ENCODE measurements at regions of chr2 and their contacts with region 1.

Region 1: DNA sequence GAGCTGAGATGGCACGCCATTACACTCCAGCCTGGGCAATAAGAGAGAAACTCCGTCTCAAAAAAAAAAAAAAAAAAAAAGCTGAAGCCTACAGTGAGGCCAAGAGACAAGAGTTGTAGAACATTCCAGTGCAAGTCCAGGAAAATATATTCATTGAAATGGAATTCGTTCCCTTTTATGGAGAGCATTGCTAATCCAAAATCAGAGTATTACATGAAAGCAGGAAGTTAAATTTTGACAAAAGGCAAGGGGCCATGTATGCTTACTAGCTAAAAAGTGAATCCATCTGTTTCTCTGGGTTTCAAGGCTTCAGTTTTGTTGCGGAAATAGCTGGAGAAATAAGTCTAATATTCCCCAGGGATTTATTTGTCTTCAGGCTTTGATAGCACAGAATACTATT is 471.7 kb downstream of the THSD7B start:
- DNase-seq: no peak
- H3K4me3 ChIP-seq: no peak overlapping the region
- H3K27ac ChIP-seq: no peak overlapping the region
- H3K4me1 ChIP-seq: no peaks in the 10 kb centered on the region
- H3K27me3 ChIP-seq: no peaks in the 10 kb centered on the region
- CTCF ChIP-seq: no peak
- POLR2A ChIP-seq: no peak

Region 2: GRCh38 chr2:136966485-136966884 is 270.6 kb before region 1 on chr2:
- intact Hi-C with region 1: loop called (anchors 10 kb)
- DNase-seq: no peak
- H3K4me3 ChIP-seq: no peak overlapping the region
- H3K27ac ChIP-seq: no peak overlapping the region
- H3K4me1 ChIP-seq: no peaks in the 10 kb centered on the region
- H3K27me3 ChIP-seq: no peaks in the 10 kb centered on the region
- CTCF ChIP-seq: no peak
- POLR2A ChIP-seq: no peak

Region 3: DNA sequence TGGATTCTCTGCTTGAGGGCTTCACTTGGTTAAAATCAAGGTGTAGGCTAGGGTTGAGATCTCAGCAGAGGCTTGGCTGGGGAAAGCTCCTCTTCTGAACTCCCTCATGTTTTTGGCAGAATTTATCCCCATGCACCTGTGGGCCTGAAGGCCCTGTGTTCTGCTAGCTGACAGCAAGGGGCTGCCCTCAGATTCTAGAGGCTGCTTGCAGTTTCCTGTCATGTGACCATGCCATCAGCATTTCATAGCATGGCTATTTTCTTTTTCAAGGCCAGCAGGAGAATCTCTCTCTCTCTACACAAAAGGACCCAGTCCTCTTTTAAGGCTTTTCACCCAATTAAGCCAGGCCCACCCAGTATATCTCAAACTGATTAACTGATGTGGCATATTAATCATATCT is 212.4 kb after region 1 on chr2:
- intact Hi-C with region 1: no loop called
- DNase-seq: no peak
- H3K4me3 ChIP-seq: no peak overlapping the region
- H3K27ac ChIP-seq: no peak overlapping the region
- H3K4me1 ChIP-seq: no peaks in the 10 kb centered on the region
- H3K27me3 ChIP-seq: no peaks in the 10 kb centered on the region
- CTCF ChIP-seq: no peak
- POLR2A ChIP-seq: no peak